ENCODE measurements at regions of chr15 and their contacts with region 1.

Region 1: GRCh38 chr15:73051811-73052678 is at the start of gene NEO1:
- DNase-seq: peak; percentile 91
- total RNA-seq, gene NEO1: 24.5 to 28.7 TPM

Region 2: GRCh38 chr15:72249142-72249810 is 802.8 kb before region 1 on chr15:
- intact Hi-C with region 1: no loop called
- DNase-seq: no peak

Region 3: DNA sequence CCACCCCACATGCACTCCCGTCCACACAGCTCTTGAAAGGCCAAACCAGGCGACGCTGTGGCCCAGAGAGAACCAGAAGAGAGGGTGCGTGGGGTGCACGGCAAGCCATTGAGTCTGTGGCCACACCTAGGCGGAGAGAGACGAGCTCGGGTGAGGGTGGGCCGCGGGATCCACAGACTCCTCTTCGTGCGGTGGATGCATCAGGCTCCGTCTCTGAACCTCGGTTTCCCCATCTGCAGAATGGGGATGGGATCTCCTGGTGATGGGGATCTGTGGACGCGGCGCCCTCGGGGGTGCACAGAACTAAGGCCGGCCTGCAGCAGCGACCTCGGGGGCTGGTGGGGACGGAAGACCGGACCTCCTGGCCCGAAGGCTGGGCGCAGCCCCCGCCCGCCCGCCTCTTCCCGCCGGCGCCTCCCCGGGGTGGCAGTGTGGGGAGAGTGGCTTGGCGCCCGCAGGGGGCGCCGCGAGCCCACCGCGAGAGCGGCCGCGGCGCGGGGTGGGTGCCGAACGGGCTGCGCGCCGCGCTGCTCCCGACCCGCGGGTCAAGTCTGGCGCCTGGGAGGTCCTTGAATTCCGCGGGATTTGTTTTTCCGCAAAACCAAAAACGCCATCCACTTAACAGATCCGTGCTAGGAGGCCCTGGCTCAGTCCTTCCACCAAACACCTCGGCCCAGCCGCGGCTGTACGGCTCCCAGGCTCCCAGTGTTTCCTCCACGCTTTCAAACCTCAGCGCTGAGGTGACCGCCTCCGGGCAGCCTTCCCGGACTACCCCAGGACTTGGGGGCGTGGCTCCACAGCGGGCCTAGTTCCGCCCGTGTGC is 255.3 kb before region 1 on chr15:
- intact Hi-C with region 1: loop called in 1 of 2 experiments (anchors 10 kb)
- DNase-seq: peak; percentile 87

Region 4: DNA sequence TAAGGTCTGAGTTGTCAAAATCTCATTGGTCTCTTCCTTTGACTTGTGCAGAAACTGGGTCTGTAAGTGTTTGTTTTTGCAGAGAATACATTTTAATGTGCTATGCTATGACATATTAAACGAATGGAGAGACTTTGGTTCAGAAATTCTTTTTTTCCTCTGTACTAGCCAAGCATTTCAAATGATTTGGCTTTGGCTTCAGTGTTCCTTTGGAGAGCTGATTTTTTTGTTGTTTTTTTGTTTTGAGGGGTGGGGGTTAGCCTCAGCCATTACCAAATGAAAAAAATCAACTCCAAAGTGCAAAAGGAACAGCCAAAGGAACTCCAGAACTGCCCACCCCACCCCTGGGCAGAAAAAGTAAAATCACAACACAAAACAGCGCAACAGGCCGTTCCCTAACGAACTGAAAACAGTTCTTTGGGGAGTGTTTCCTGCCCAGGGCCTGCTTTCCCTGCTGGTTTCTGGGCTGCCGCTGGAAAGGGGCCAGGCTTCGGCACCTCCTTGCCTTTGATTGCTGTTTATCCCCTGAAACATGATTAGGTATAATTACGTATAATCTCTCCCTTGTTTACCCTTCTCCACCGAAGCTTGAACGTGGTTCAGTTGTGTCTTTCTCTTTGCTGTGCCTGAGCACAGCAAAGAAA is 57.4 kb before region 1 on chr15:
- intact Hi-C with region 1: loop called in 1 of 2 experiments (anchors 10 kb)
- DNase-seq: no peak

Measured in posterior vena cava (tissue), 2 donors.